ENCODE measurements at regions of chr12 and their contacts with region 1.

Region 1: GRCh38 chr12:89949457-89950195 is 241.0 kb upstream of the ATP2B1 start:
- DNase-seq: peak; percentile 91
- H3K4me3 Mint-ChIP-seq: peak overlapping the region; percentile 13
- H3K27ac Mint-ChIP-seq: peak overlapping the region; percentile 93
- H3K4me1 Mint-ChIP-seq: peaks cover 42% of the 10 kb centered on the region
- H3K27me3 Mint-ChIP-seq: no peaks in the 10 kb centered on the region
- CTCF ChIP-seq: peak; percentile 29

Region 2: DNA sequence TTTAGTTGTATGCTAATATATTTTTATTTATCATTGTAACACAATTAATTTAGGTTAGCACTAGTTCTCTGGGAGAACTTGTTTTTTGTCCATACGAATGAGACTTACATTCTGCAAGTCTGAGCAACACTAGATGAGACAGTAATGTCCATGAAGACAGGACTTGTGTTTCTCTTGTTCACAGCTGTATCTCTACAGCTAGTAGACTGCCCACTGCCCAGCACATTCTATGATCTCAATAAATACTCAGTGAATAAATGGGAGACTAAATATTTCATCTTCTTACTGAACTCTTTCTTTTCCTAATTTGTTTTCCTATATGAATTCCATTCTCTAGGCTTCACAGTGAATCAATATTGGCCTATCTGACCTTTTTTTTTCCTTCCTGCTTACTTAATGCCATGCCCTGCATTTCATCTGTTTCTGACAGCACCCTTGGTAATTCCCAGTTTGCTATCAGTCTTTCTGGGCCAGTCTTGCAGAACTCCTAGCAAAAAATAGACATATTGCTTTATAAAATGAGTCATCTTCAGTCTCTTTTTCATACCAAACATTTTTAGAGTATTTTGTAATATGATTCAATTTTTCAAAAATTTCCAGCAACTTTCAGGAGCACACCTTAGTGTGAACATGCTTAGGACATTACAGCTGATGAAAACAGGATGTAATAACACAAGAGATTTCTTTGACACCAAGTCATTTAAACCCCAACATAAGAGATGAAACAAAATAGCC is 55.5 kb before region 1 on chr12:
- CTCF ChIA-PET with region 1: no interaction called
- POLR2A ChIA-PET with region 1: no interaction called
- intact Hi-C with region 1: loop called (anchors 1 kb)
- DNase-seq: peak; percentile 42
- H3K4me3 Mint-ChIP-seq: no peak overlapping the region
- H3K27ac Mint-ChIP-seq: peak overlapping the region; percentile 80
- H3K4me1 Mint-ChIP-seq: peaks cover 17% of the 10 kb centered on the region
- H3K27me3 Mint-ChIP-seq: no peaks in the 10 kb centered on the region
- CTCF ChIP-seq: no peak

Region 3: DNA sequence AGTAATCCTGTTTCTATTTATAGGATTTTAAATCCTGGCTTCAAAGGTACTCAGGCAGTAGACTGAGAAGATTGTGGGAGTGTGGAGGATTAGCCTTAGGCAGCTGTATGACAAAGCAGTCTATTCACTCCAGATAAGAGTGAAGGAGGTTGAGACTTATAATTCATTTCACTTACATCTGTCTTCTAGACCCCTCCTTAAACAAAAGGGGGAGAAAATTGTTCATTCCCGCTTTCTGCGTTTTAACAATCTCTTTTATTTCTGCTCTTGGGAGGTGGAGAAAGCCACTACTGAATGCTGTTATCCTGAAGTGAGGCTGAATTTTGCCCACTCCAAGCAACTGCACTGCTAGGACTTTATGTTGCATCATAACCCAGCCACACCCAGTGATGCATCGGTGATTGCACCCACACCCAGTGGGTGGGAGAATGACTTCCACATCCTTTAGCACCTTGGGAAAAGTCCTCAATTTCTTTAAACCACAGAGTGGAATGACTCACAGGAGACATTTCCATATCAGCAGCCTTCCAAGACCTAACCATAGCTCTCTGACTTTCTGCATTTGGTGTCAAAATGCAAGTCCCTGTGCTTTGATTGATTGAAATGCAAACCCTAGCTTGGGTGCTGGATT is 141.5 kb after region 1 on chr12:
- CTCF ChIA-PET with region 1: no interaction called
- POLR2A ChIA-PET with region 1: interaction called, 5 read pairs
- intact Hi-C with region 1: loop called (anchors 2 kb)
- DNase-seq: peak; percentile 98
- H3K4me3 Mint-ChIP-seq: peak overlapping the region; percentile 9
- H3K27ac Mint-ChIP-seq: peak overlapping the region; percentile 91
- H3K4me1 Mint-ChIP-seq: peaks cover 17% of the 10 kb centered on the region
- H3K27me3 Mint-ChIP-seq: no peaks in the 10 kb centered on the region
- CTCF ChIP-seq: no peak